IMR-90 (cell line): ENCODE measurements at regions of chr13 and their contacts with region 1.

Region 1: DNA sequence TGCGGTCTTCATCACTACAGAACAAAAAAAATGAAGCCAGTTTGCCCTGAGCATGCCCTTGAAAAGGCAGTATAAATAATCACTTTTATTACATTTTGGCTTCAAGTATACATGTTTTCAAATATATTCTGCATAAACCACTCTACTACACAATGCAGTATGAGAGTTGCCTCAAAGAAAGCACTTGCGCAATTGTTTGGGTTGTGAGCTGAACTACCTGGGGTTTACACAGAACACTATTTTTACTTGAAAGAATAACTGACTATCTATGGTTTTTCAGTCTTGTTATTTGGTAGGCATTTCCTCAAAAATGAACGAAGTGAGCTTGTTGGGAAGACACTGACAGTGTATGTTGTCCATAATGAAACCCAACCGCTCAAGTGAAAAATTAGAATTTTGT is 264.4 kb upstream of the KLF12 start:
- DNase-seq: no peak
- ATAC-seq: no peak
- H3K4me3 ChIP-seq: no peak overlapping the region
- H3K27ac ChIP-seq: no peak overlapping the region
- H3K4me1 ChIP-seq: no peaks in the 10 kb centered on the region
- H3K27me3 ChIP-seq: no peaks in the 10 kb centered on the region
- CTCF ChIP-seq: no peak
- POLR2A ChIP-seq: no peak
- RAD21 ChIP-seq: no peak

Region 2: GRCh38 chr13:74361264-74361663 is 37.3 kb before region 1 on chr13:
- CTCF ChIA-PET with region 1: no interaction called
- POLR2A ChIA-PET with region 1: no interaction called
- dilution Hi-C with region 1: no loop called
- in situ Hi-C with region 1: no loop called
- intact Hi-C with region 1: loop called (anchors 1 kb)
- DNase-seq: no peak
- ATAC-seq: no peak
- H3K4me3 ChIP-seq: no peak overlapping the region
- H3K27ac ChIP-seq: no peak overlapping the region
- H3K4me1 ChIP-seq: no peaks in the 10 kb centered on the region
- H3K27me3 ChIP-seq: no peaks in the 10 kb centered on the region
- CTCF ChIP-seq: no peak
- POLR2A ChIP-seq: no peak
- RAD21 ChIP-seq: no peak

Region 3: DNA sequence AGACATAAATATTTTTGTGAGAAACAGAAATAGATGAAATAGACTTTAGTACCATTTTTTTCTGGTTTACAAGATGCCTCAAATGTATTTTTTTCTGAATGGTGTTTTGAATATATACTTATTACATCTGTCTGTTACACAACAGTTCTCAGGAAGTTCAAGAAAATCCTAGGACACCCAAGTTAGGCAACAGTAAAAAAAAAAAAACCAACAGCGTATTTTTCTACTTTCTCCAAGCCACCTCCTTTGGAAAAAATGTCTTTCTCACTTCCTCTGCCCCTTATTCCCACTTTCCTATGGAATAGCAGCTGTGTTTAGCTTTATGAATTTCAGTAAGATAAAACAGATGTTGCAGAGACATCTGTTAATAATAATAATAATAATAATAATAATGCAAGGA is 225.2 kb after region 1 on chr13:
- CTCF ChIA-PET with region 1: no interaction called
- POLR2A ChIA-PET with region 1: no interaction called
- dilution Hi-C with region 1: no loop called
- in situ Hi-C with region 1: no loop called
- intact Hi-C with region 1: no loop called
- DNase-seq: no peak
- ATAC-seq: no peak
- H3K4me3 ChIP-seq: no peak overlapping the region
- H3K27ac ChIP-seq: no peak overlapping the region
- H3K4me1 ChIP-seq: no peaks in the 10 kb centered on the region
- H3K27me3 ChIP-seq: no peaks in the 10 kb centered on the region
- CTCF ChIP-seq: no peak
- POLR2A ChIP-seq: no peak
- RAD21 ChIP-seq: no peak

Region 4: DNA sequence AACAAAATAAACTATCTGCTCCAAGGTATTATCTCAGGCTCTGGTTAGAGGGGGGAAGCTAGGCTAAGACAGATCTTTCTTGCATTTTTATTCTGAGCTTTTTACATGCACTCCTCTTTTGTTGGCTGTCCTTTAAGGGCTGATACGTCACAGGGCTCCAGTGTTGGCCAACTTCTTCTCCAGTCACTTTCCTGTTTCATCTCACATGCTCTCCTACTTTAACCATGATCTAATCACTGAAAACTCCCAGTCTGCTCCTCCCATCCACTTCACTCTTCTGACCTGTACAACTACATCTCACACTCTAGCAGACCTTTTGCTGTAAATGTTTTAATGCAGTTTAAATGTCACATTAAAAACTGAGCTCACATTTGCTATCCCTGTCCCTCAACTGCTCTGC is 245.6 kb after region 1 on chr13:
- CTCF ChIA-PET with region 1: no interaction called
- POLR2A ChIA-PET with region 1: no interaction called
- dilution Hi-C with region 1: no loop called
- in situ Hi-C with region 1: no loop called
- intact Hi-C with region 1: no loop called
- DNase-seq: peak; percentile 24
- ATAC-seq: no peak
- H3K4me3 ChIP-seq: no peak overlapping the region
- H3K27ac ChIP-seq: no peak overlapping the region
- H3K4me1 ChIP-seq: no peaks in the 10 kb centered on the region
- H3K27me3 ChIP-seq: no peaks in the 10 kb centered on the region; the same call in 1 of the 2 replicates
- CTCF ChIP-seq: no peak
- POLR2A ChIP-seq: no peak
- RAD21 ChIP-seq: no peak